Right ventricle myocardium inferior (tissue), 1 donor: ENCODE measurements at regions of chr10 and their contacts with region 1.

Region 1: DNA sequence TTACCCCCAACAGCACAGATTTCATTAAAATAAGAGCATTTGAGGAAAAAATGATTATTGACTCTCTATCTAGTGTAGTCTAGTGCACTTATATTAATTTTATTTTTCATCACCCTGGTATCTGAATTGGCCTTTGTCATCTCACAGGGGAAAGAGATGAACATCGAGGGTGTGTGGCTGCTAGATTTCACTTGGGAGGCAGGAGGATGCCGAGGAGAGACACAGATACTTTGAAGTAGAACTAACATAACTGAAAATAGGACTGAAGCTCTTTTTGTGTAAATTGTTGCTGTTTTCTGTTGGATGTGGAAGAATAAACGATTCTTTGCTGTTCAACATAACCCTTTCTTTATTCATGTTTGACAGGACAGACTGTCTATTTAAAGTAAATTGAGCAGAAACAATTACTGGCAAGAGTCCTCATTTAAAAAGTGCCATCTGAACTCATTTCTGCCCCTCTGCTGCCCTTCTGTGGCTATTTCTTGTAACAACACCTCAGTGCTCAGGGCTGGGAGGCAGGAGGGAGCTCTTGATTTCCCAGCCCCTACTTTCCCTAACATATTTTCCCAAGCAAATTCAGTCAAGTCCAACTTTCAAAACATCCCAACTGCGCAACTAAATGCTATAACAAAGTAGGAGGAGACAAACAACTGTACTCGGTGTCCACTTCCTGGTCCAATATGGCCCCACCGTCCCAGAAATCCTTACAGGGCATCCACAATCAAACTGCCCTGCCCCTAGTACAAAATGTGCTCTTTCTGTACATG is 15.6 kb downstream of the LYZL1 start:
- DNase-seq: no peak
- ATAC-seq: peak; percentile 77

Region 2: DNA sequence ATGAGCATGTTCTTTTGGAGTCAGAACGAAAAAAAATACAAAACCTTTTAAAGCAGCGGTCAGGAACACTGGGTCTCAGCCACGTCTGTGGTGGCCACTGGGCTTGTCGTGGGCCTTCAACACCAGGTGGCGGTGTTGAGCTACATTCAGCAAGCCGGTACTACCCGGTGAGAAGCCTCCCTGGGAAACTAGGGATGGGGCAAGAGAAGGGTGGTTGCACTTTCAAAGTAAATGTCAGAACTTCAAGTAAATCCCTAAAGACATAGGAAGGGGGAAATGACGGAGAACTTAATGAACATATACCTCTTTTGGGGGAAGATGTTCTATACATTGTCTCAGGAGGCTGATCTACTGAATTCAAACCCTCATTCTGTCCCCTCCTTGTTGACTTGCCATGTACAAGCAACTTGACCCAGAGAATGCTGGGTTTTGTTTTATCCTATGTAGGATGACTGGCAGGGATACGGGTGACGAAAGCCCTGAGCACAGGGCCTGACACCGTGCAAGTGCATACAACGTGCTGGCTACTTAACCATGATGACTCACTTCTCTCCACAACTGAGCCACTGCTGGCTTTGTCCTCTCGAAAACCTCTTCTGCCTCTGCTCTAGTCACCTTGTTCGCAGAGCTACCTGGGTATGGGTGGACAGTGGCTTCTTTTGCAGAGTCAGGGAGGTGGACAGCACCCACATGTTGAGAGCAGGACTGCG is 676.1 kb before region 1 on chr10:
- intact Hi-C with region 1: loop called (anchors 10 kb)
- DNase-seq: peak; percentile 85
- ATAC-seq: peak; percentile 87

Region 3: GRCh38 chr10:28663576-28664313 is 640.7 kb before region 1 on chr10:
- intact Hi-C with region 1: loop called (anchors 1 kb)
- DNase-seq: no peak
- ATAC-seq: peak; percentile 92

Region 4: DNA sequence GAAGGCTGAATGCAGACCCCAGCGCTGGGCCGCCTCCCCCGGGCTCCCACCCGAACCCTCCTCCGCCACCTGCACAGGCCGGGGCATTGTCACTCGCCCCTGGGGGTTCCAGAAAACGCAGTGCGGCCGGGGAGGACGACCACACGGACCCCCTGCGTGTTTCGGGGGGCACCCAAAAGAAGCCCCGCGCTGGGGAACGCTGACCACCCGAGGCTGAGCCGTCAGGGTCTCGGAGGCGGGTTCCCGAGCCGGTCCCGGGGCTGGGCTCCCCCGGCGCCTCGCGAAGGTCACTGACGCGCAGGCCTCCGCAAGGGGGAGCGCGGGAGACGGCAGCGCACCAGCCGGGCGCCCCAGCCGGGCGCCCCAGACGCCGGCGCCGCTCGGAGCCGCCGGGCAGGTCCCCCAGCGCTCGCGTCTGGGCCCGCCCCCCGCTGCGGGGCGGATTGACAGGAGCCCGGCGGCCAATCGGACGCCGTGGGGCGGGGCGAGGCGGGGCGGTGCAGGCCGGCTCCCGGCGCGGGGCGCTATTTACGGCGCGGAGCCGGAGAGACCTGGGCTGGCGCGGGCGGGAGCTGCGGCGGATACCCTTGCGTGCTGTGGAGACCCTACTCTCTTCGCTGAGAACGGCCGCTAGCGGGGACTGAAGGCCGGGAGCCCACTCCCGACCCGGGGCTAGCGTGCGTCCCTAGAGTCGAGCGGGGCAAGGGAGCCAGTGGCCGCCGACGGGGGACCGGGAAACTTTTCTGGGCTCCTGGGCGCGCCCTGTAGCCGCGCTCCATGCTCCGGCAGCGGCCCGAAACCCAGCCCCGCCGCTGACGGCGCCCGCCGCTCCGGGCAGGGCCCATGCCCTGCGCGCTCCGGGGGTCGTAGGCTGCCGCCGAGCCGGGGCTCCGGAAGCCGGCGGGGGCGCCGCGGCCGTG is 627.2 kb before region 1 on chr10 and contains the start of gene BAMBI:
- intact Hi-C with region 1: loop called (anchors 5 kb)
- DNase-seq: peak; percentile 96
- ATAC-seq: peak; percentile 98
- total RNA-seq, gene BAMBI: 17.9 TPM

Region 5: GRCh38 chr10:28984431-28984830 is 320.0 kb before region 1 on chr10:
- intact Hi-C with region 1: loop called (anchors 10 kb)
- DNase-seq: peak; percentile 91
- ATAC-seq: peak; percentile 98

Region 6: DNA sequence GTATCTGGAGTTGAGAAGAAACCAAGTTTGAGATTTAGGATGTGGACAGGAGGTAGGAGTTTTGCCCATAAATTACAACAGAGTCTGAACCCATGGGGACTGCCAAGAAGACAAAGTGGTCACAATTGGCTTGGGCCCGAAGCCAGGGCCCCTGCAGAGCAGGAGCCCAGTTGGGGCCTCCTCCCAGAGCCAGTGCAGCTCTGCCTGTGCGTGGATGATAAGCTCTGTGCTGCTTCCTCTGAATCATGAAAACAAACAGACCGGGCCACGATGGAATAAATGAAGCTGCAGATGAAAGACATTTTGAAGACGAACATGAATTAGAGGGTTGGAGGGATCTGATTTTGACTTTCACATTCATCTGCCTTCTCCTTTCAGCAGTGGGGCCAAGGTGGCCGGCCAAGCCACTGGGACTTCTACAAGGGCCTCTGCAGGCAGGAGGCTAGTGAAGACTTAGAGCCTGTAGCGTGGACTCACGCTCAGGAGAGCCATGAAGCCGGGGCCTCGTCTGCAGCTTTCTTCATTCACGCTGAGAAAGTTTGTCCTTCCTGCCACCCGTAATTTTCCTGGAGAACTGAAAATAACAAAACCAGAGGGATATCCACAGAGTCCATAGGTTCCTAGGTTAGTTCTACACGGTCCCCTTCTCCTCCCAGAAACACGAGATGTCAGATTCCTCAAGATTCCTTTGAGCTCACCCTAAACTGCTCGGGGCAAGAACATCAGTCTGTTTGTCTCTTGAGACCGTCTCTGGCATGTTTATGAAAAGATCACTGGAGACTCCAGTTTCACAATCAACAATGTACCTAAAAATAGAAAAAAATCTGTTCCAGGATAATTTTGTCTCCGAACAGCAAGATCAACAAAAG is 172.3 kb before region 1 on chr10:
- intact Hi-C with region 1: loop called (anchors 10 kb)
- DNase-seq: no peak
- ATAC-seq: peak; percentile 58

Region 7: DNA sequence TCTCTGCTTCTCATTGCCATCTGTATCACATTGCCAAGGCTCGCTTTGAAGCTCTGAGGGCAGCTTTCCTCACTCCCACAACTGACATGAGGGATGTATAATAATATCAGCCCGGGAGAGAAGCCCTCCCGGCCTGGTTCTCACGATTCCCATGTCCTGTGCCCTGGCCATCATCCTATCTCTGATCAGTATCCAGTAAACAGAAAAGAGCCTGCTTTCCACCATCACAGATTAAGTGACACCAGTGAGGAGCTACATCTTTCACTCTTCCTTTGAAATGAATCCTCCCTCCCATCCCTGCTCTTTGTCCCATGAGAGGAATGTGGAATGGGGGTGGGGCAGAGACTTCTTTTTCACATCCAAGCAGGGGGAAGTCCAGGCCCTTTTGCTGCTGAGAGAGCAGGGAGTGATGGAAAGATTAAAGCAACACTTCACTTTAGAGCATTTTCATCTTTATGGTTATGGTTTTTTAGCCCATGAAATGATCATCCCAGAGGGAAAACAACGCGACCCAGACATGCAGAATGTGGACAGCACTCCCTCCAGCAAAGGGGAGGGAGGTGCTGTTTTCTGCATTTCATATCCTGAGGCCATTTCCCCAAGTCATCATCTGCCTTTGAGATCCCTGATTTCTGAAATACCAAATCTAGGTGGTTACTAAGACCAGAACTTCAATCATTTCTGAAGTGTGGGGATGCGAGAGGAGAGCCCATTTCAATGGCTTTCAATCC is 100.2 kb before region 1 on chr10:
- intact Hi-C with region 1: no loop called
- DNase-seq: no peak
- ATAC-seq: no peak

Region 8: GRCh38 chr10:29239569-29240472 is 64.6 kb before region 1 on chr10:
- intact Hi-C with region 1: loop called (anchors 10 kb)
- DNase-seq: no peak
- ATAC-seq: no peak